ENCODE measurements at regions of chr1 and their contacts with region 1.

Region 1: GRCh38 chr1:3410142-3410925 is 44.1 kb upstream of the ARHGEF16 start:
- DNase-seq: peak; percentile 58
- ATAC-seq: peak; percentile 87
- H3K4me3 ChIP-seq: no peak overlapping the region
- H3K27ac ChIP-seq: no peak overlapping the region
- H3K4me1 ChIP-seq: peaks cover 19% of the 10 kb centered on the region
- H3K27me3 ChIP-seq: peaks cover 3 to 9% of the 10 kb centered on the region in 2 experiments; a peak in 4 of 5 replicates
- CTCF ChIP-seq: peak; percentile 91
- EP300 ChIP-seq: no peak
- POLR2A ChIP-seq: no peak
- RAD21 ChIP-seq: peak; percentile 96

Region 2: DNA sequence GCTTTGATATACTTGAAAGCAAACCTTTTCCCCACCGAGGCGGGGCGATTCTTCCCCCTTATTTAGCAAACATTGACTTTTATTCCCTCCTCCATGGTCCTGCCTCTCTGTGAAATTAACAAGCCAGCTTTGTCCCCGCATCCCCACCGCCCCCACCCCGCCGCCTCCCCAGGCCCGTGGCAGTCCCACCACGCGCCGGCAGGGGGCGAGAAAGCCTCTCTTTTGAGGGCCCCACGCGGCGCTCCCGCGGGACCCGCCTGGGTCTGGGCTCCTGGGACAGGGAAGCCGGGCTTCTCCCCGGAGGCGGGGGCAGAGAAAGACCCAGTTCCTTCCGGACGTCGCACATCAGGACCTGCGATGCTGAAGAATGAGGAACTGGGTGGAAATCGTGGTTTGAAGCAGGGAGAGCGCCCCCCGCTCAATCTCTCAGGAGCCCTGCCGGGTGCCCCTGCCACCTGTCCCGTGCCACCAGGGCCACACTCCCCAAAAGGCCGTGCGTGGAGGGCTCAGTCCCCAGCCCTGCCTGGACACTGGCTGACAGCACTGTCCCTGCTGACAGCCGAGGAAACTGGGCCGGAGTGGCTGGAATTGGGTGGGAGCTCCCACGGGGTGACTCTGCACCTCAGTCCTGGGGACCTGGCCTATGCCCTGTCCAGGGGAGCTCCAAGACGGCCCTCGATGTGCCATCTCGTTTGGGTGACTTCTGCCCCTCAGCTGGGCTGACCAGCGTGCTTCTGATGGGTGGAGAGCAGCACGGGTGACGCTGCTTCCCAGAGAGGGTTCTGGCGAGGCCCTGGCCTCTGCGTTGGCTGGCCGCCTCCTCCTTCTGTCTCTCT is 397.7 kb before region 1 on chr1:
- CTCF ChIA-PET with region 1: interaction called, 12 read pairs
- POLR2A ChIA-PET with region 1: no interaction called
- in situ Hi-C with region 1: no loop called
- intact Hi-C with region 1: no loop called
- DNase-seq: peak; percentile 12
- ATAC-seq: peak; percentile 67
- H3K4me3 ChIP-seq: no peak overlapping the region
- H3K27ac ChIP-seq: no peak overlapping the region
- H3K4me1 ChIP-seq: no peaks in the 10 kb centered on the region
- H3K27me3 ChIP-seq: peaks cover 5 to 31% of the 10 kb centered on the region in 2 experiments
- CTCF ChIP-seq: peak; percentile 74
- EP300 ChIP-seq: no peak
- POLR2A ChIP-seq: no peak
- RAD21 ChIP-seq: peak; percentile 73

Region 3: GRCh38 chr1:3069491-3070303 is 340.6 kb before region 1 on chr1:
- CTCF ChIA-PET with region 1: interaction called, 13 read pairs
- POLR2A ChIA-PET with region 1: no interaction called
- in situ Hi-C with region 1: no loop called
- intact Hi-C with region 1: loop called (anchors 5 kb)
- DNase-seq: peak; percentile 64
- ATAC-seq: peak; percentile 47
- H3K4me3 ChIP-seq: peak overlapping the region; percentile 60 to 77 (median 74)
- H3K27ac ChIP-seq: peak overlapping the region; percentile 56
- H3K4me1 ChIP-seq: peaks cover 35% of the 10 kb centered on the region
- H3K27me3 ChIP-seq: peaks cover 2 to 23% of the 10 kb centered on the region in 2 experiments
- CTCF ChIP-seq: peak; percentile 77
- EP300 ChIP-seq: no peak
- POLR2A ChIP-seq: no peak
- RAD21 ChIP-seq: peak; percentile 55

Measured in HepG2 (cell line).